T-cell (primary cell): ENCODE measurements at regions of chr9 and their contacts with region 1.

Region 1: DNA sequence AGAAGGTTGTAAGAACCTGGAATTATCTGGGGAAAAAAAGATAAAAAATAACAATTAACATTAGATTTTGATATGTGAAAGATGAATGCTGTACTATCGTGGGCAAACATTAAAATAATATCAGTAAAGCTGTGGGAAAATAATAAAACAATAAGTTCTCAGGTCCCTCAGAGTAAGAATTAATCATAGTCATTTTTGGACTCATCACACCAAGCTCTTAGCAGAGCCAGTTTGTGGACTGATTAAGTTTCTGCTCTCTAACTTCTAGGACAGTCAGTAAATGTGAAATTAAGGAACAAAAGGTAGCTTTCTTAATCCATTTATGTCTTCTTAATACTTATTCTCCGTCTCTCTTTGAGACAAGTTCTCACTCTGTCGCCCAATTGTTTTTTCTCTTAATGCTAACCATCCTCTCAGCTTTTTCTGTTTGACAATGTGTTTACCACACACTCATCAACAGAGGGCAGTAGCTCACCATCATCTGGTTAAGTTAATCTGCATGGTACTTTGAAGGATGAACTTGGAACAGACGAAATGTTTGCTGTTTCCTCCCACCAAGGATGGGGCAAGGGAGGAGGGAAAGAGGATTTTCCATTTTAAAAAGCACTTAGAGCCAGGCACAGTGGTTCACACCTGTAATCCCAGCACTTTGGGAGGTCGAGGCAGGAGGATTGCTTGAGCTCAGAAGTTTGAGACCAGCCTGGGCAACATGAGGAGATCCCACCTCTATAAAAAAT is 5.3 kb upstream of the ACO1 start:
- DNase-seq: peak in 28 of 35 experiments; percentile 7 to 87 (median 39)
- ATAC-seq: peak; percentile 74 to 82 (median 80)
- H3K4me3 ChIP-seq: no peak overlapping the region
- H3K4me3 Mint-ChIP-seq: no peak overlapping the region
- H3K27ac ChIP-seq: no peak overlapping the region
- H3K27ac Mint-ChIP-seq: peak overlapping the region; percentile 23 to 25
- H3K4me1 ChIP-seq: peaks cover 0 to 10% of the 10 kb centered on the region in 2 experiments
- H3K4me1 Mint-ChIP-seq: peaks cover 14 to 16% (median 15%) of the 10 kb centered on the region in 3 donors
- H3K27me3 ChIP-seq: peaks cover 5 to 7% of the 10 kb centered on the region in 2 experiments
- H3K27me3 Mint-ChIP-seq: peaks cover 10 to 11% of the 10 kb centered on the region in 2 donors

Region 2: DNA sequence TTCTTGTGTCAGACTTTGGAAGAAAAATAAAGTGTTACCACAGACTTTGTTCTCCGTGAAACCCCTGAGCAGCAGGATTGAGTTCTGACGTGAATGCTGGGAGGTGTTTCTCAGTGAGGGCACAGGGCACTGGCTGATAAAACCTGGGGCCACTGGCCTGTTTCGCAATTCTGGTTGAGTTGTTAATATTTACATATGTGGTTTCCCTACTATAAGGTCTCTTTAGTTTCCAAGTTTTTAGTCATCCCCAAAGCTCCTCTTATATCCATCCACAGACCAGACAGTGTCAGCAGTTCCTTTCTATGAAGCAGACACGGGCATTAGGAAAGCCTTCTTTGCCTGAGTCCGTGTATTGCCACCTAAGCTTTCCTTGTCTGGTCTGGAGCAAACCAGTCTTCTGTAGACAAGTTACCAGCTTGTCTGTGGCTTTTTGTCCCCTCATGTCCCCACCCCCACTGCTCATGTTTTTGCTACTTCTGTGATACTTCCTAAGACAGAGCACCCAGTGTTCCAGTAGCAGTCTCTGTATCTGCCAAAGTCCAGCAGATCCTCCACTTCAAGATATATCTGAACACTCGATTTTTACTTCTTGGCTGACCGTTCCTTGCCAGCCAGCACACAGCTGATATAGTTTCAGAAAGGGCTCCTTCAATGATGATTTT is 47.2 kb after region 1 on chr9:
- CTCF ChIA-PET with region 1: interaction called, 21 read pairs
- POLR2A ChIA-PET with region 1: no interaction called
- DNase-seq: no peak
- ATAC-seq: no peak
- H3K4me3 ChIP-seq: no peak overlapping the region
- H3K4me3 Mint-ChIP-seq: no peak overlapping the region
- H3K27ac ChIP-seq: no peak overlapping the region
- H3K27ac Mint-ChIP-seq: peak overlapping the region in 1 of 2 donors; percentile 12
- H3K4me1 ChIP-seq: no peaks in the 10 kb centered on the region
- H3K4me1 Mint-ChIP-seq: peaks cover 0 to 6% (median 0%) of the 10 kb centered on the region in 3 donors
- H3K27me3 ChIP-seq: no peaks in the 10 kb centered on the region
- H3K27me3 Mint-ChIP-seq: no peaks in the 10 kb centered on the region

Region 3: DNA sequence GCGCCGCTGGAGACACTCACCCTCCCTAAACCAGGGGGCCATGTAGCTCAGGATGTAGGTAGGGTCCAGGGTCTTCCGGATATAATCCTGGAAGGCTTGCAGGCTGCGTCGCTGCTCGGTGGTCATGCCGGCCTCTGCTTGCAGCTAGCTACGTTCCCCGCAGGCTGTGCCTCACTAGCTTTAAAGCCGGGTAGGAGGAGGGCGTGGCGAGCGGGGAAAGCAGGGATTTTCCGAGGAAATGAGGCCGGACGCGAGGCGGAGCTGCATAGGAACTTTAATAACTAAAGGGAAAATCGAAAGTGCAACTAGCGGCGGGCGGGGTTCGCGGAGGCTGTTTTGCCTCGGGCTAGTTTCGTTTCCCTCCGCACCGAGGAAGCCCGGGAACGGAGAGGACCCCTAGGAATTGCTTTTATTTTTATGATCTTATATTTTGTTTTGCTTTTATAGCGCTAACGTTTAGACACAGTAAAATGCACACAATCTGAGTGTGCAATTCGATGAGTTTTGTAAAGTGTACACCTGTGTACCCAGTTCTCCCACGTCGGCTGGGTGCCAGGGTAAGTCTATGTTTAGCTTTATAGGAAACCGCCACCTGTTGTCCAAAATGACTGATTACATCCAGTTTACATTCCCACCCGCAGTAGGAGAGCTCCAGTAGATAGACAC is 147.0 kb after region 1 on chr9 and contains the start of gene RIGI:
- CTCF ChIA-PET with region 1: interaction called, 17 to 60 read pairs
- POLR2A ChIA-PET with region 1: interaction called in 1 of 2 experiments, 7 read pairs
- DNase-seq: peak; percentile 40 to 92 (median 76)
- ATAC-seq: peak; percentile 78 to 84 (median 83)
- H3K4me3 ChIP-seq: peak within 1 kb of the TSS; percentile 77 to 85
- H3K4me3 Mint-ChIP-seq: peak within 1 kb of the TSS; percentile 87 to 98 (median 92)
- H3K27ac ChIP-seq: peak within 1 kb of the TSS; percentile 74
- H3K27ac Mint-ChIP-seq: peak within 1 kb of the TSS; percentile 97 to 99
- H3K4me1 ChIP-seq: peaks cover 16 to 17% of the 10 kb centered on the region in 2 experiments
- H3K4me1 Mint-ChIP-seq: peaks cover 49 to 64% (median 57%) of the 10 kb centered on the region in 3 donors
- H3K27me3 ChIP-seq: no peaks in the 10 kb centered on the region
- H3K27me3 Mint-ChIP-seq: no peaks in the 10 kb centered on the region
- total RNA-seq, gene RIGI: 14.0 to 27.1 (median 19.3) TPM

Region 4: DNA sequence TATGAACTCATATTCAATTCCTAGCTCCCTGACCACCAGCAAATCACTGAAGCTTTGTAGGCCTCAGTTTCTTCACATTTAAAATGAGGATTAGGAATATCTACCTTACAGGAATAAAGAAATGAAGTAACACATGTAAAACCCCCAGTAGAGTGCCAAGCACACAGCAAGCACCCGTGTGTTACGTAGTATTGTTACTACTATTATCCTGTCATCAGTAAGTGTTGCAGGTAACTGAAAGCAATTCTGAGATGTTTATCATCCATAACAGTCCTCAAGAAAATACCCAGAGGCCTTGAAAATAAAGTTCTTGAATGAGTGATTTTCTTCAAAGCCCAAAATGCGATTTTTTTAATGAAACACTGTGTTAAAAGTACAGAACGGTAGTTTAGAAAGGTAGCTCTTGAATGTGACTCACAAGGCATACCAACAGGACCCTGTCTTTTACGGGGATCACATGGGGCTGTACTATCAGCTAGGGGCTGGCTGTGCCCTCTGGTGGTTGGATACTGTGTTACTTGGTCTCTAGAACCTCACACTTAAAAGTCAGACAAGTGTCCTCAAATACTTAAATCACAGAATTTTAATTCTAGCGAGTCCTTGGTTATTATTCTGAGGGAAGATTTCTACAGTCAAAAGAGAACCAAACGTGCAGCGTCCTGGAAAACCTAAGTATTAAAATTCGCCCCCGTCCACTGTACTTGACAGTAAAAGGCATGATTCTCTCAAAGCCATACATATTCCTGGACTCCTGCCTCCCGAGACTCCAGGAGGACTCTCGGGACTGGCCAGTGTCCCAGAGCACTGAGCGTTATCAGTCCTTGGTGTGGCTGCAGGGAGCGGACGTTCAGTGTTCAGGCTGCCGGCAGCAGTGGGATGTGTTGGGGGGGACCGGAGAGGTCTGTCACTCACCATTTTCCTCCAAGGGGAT is 193.1 kb after region 1 on chr9:
- CTCF ChIA-PET with region 1: interaction called, 115 to 201 read pairs
- POLR2A ChIA-PET with region 1: interaction called in 1 of 2 experiments, 6 read pairs
- DNase-seq: peak; percentile 41 to 89 (median 75)
- ATAC-seq: peak; percentile 83 to 87 (median 86)
- H3K4me3 ChIP-seq: peak overlapping the region; percentile 84 to 100
- H3K4me3 Mint-ChIP-seq: peak overlapping the region; percentile 98 to 99 (median 99)
- H3K27ac ChIP-seq: peak overlapping the region; percentile 85
- H3K27ac Mint-ChIP-seq: peak overlapping the region; percentile 98 to 99
- H3K4me1 ChIP-seq: peaks cover 4 to 19% of the 10 kb centered on the region in 2 experiments
- H3K4me1 Mint-ChIP-seq: peaks cover 33 to 36% (median 34%) of the 10 kb centered on the region in 3 donors
- H3K27me3 ChIP-seq: no peaks in the 10 kb centered on the region
- H3K27me3 Mint-ChIP-seq: no peaks in the 10 kb centered on the region

Region 5: DNA sequence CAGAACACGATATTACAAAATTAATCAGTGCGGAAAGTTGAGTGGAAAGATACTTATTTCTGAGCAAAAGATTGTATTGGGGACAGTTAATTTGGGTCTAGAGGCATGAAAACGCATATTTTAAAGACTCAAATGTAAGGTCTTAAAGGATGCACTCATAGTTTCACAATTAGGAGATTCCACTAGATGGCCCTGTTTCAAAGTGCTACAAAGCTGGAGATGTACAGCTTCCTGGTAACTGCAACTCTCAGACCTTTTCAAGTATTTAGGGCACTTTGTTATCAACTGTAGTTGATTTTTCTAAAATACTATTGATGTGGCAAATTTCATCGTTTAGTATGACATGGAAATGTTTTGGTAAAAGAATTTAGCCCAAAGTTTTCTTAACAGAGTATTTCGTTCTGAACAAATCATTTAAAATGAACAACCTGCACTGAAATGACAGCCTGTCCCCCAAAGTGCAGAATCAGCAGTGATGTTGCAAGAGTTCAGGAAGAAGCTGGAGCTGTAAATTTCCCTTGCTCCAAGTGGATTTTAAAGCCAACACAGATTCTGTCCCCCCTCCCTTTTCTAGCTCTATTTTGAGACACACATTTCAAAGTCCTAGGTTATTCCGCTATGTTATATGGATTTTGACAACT is 210.0 kb after region 1 on chr9:
- CTCF ChIA-PET with region 1: interaction called in 1 of 2 experiments, 338 read pairs
- POLR2A ChIA-PET with region 1: no interaction called
- DNase-seq: peak in 1 of 35 experiments; percentile 39
- ATAC-seq: peak in 2 of 4 experiments; percentile 44 to 73
- H3K4me3 ChIP-seq: no peak overlapping the region
- H3K4me3 Mint-ChIP-seq: no peak overlapping the region
- H3K27ac ChIP-seq: no peak overlapping the region
- H3K27ac Mint-ChIP-seq: no peak overlapping the region
- H3K4me1 ChIP-seq: no peaks in the 10 kb centered on the region
- H3K4me1 Mint-ChIP-seq: no peaks in the 10 kb centered on the region
- H3K27me3 ChIP-seq: peaks cover 2 to 4% of the 10 kb centered on the region in 2 experiments
- H3K27me3 Mint-ChIP-seq: peaks cover 24 to 33% of the 10 kb centered on the region in 2 donors